CD8-positive, alpha-beta memory T cell (primary cell): ENCODE measurements at regions of chr3 and their contacts with region 1.

Region 1: DNA sequence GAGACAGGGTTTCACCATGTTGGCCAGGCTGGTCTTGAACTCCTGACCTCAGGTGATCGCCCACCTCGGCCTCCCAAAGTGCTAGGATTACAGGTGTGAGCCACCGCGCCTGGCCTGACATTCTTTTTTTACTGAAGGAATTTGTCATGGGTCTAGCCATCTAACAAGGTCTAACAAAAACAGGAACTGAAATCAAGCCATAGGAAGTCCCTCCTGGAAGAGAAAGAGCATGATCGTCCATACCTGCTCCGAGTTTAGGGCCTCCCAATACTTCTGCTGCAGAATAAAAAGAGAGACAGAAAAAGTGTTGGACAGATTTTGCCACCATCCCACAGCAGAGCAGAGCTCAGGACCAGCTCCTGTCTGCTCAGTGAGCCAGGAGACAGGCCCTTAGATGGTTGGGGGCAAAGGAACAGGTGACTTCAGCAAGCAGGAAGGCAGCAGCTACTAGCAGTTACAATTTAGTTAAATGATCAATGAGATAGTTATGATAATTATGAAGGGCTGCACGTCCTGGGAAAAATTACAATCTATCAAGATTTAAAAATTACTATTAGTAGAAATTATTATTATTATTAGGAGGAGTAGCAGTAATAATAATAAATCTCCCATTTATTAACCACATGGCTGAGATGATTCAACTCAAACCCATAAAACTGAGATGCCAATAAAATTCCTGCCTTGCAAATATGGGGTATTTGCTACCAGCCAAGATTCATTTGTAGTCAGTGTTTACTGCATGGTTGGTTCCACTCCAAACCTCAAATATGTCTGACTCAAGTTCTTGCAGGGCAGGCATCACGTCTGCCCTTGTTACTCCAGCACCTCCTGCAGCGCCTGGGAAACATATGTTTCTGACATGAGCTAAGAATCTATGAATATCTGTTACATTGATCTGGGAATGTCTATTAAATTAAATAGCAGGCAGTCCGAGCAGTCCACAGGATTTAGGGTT is 40.1 kb downstream of the TMEM44 start:
- DNase-seq: no peak
- H3K4me3 ChIP-seq: no peak overlapping the region
- H3K4me3 Mint-ChIP-seq: no peak overlapping the region
- H3K27ac ChIP-seq: no peak overlapping the region
- H3K27ac Mint-ChIP-seq: no peak overlapping the region
- H3K4me1 ChIP-seq: no peaks in the 10 kb centered on the region
- H3K4me1 Mint-ChIP-seq: peaks cover 0 to 5% (median 5%) of the 10 kb centered on the region in 3 donors
- H3K27me3 ChIP-seq: no peaks in the 10 kb centered on the region
- H3K27me3 Mint-ChIP-seq: no peaks in the 10 kb centered on the region

Region 2: DNA sequence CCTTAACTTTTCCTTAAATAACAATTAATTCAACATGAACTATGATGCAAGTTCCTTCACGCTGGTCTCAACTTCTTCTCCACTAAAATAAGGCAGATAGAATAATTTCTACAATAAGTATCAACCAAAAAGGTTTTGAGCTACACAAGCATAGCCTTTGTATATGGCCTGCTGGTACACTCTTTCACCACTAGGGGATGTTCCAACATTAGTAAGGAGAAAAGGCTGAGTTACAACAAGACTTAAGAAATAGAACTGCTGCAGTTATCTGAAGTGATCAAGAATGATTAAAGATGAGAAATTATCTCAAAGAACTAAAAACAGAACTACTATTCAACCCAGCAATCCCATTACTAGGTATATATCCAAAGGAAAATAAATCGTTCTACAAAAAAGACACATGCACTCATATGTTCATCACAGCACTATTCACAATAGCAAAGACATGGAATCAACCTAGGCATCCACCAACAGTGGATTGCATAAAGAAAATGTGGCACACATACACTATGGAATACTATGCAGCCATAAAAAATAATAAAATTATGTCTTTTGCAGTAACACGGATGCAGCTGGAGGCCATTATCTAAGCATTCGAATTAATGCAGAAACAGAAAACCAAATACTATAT is 120.7 kb before region 1 on chr3:
- CTCF ChIA-PET with region 1: interaction called, 17 read pairs
- POLR2A ChIA-PET with region 1: no interaction called
- DNase-seq: peak in 2 of 5 donors; percentile 42 to 48
- H3K4me3 ChIP-seq: no peak overlapping the region
- H3K4me3 Mint-ChIP-seq: no peak overlapping the region
- H3K27ac ChIP-seq: no peak overlapping the region
- H3K27ac Mint-ChIP-seq: no peak overlapping the region
- H3K4me1 ChIP-seq: peaks cover 8% of the 10 kb centered on the region
- H3K4me1 Mint-ChIP-seq: peaks cover 9 to 15% (median 13%) of the 10 kb centered on the region in 3 donors
- H3K27me3 ChIP-seq: no peaks in the 10 kb centered on the region
- H3K27me3 Mint-ChIP-seq: no peaks in the 10 kb centered on the region

Region 3: DNA sequence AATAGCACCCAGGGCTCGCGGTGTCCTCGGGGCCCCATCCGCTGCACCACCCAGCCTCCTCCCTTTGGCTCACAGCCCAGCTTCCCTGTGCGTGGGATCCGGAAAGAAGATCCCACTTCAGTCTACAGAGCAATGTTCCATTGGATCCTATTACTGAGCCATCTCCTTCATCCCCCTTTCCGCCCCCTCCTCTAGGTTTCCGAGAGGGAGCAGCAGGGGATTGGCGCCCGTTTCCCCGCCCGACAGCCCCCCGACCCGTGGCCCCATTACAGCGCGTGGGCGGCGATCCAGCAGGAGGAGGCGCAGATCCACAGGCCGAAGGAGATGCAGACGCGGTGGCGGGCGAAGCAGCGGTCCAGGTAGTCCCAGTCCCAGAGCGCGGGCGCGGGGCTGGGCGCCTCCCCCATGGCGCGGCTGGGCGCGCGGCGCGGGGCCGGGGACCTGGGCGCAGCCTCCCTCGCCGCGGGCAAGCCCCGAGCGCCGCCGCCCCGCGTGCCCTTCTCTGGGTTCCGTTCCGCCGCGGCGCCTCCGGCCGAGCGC is 39.8 kb after region 1 on chr3:
- CTCF ChIA-PET with region 1: no interaction called
- POLR2A ChIA-PET with region 1: no interaction called
- DNase-seq: no peak
- H3K4me3 ChIP-seq: peak overlapping the region; percentile 59
- H3K4me3 Mint-ChIP-seq: peak overlapping the region; percentile 83 to 91 (median 86)
- H3K27ac ChIP-seq: no peak overlapping the region
- H3K27ac Mint-ChIP-seq: peak overlapping the region in 4 of 8 donors; percentile 54 to 83 (median 59)
- H3K4me1 ChIP-seq: peaks cover 7% of the 10 kb centered on the region
- H3K4me1 Mint-ChIP-seq: peaks cover 11 to 19% (median 11%) of the 10 kb centered on the region in 3 donors
- H3K27me3 ChIP-seq: no peaks in the 10 kb centered on the region
- H3K27me3 Mint-ChIP-seq: no peaks in the 10 kb centered on the region